ENCODE measurements at regions of chr5 and their contacts with region 1.

Region 1: GRCh38 chr5:67032921-67033664 is 163.5 kb downstream of the CD180 start:
- DNase-seq: no peak
- ATAC-seq: no peak
- H3K4me3 Mint-ChIP-seq: no peak overlapping the region
- H3K27ac Mint-ChIP-seq: peak overlapping the region; percentile 47
- H3K4me1 Mint-ChIP-seq: peaks cover 75% of the 10 kb centered on the region
- H3K27me3 Mint-ChIP-seq: no peaks in the 10 kb centered on the region

Region 2: GRCh38 chr5:67021521-67021920 is 11.6 kb before region 1 on chr5:
- CTCF ChIA-PET with region 1: interaction called, 3 read pairs
- POLR2A ChIA-PET with region 1: interaction called, 3 read pairs
- intact Hi-C with region 1: loop called in 1 of 2 experiments (anchors 1 kb)
- DNase-seq: no peak
- ATAC-seq: peak; percentile 97
- H3K4me3 Mint-ChIP-seq: no peak overlapping the region
- H3K27ac Mint-ChIP-seq: no peak overlapping the region
- H3K4me1 Mint-ChIP-seq: peaks cover 55% of the 10 kb centered on the region
- H3K27me3 Mint-ChIP-seq: no peaks in the 10 kb centered on the region

Region 3: GRCh38 chr5:67050136-67050535 is 17.0 kb after region 1 on chr5:
- CTCF ChIA-PET with region 1: interaction called, 10 read pairs
- POLR2A ChIA-PET with region 1: no interaction called
- intact Hi-C with region 1: no loop called
- DNase-seq: no peak
- ATAC-seq: no peak
- H3K4me3 Mint-ChIP-seq: no peak overlapping the region
- H3K27ac Mint-ChIP-seq: no peak overlapping the region
- H3K4me1 Mint-ChIP-seq: peaks cover 19% of the 10 kb centered on the region
- H3K27me3 Mint-ChIP-seq: no peaks in the 10 kb centered on the region